ENCODE measurements at regions of chr10 and their contacts with region 1.

Region 1: GRCh38 chr10:66259836-66260235 is 666.0 kb upstream of the LRRTM3 start:
- DNase-seq: no peak
- ATAC-seq: no peak
- H3K4me3 ChIP-seq: no peak overlapping the region
- H3K4me3 Mint-ChIP-seq: no peak overlapping the region
- H3K27ac ChIP-seq: no peak overlapping the region
- H3K27ac Mint-ChIP-seq: no peak overlapping the region
- H3K4me1 ChIP-seq: no peaks in the 10 kb centered on the region
- H3K4me1 Mint-ChIP-seq: no peaks in the 10 kb centered on the region
- H3K27me3 ChIP-seq: no peaks in the 10 kb centered on the region
- H3K27me3 Mint-ChIP-seq: no peaks in the 10 kb centered on the region
- CTCF ChIP-seq: no peak

Region 2: DNA sequence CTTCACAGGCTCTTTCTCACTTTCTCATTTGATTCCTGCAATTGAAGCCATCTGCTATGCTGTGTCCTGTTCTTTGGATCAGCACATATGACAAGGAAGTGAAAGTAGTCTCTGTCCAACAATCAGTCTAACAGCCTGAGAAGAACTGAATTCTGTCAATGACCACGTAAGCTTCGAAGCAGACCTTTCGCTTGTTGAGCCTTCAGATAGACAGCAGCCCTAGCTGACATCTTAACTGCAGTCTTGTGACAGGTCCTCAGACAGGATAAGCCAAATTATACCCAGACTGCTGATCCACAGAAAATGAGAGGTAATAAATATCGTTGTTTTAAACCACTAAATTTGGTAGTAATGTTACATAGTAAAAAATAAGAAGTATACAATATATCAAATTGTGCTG is 25.0 kb before region 1 on chr10:
- CTCF ChIA-PET with region 1: no interaction called
- POLR2A ChIA-PET with region 1: no interaction called
- intact Hi-C with region 1: loop called in 1 of 2 experiments (anchors 1 kb)
- DNase-seq: no peak
- ATAC-seq: no peak
- H3K4me3 ChIP-seq: no peak overlapping the region
- H3K4me3 Mint-ChIP-seq: no peak overlapping the region
- H3K27ac ChIP-seq: no peak overlapping the region
- H3K27ac Mint-ChIP-seq: no peak overlapping the region
- H3K4me1 ChIP-seq: no peaks in the 10 kb centered on the region
- H3K4me1 Mint-ChIP-seq: no peaks in the 10 kb centered on the region
- H3K27me3 ChIP-seq: no peaks in the 10 kb centered on the region
- H3K27me3 Mint-ChIP-seq: no peaks in the 10 kb centered on the region
- CTCF ChIP-seq: no peak

Region 3: GRCh38 chr10:66242885-66243284 is 17.0 kb before region 1 on chr10:
- CTCF ChIA-PET with region 1: no interaction called
- POLR2A ChIA-PET with region 1: no interaction called
- intact Hi-C with region 1: loop called in 1 of 2 experiments (anchors 2 kb)
- DNase-seq: no peak
- ATAC-seq: no peak
- H3K4me3 ChIP-seq: no peak overlapping the region
- H3K4me3 Mint-ChIP-seq: no peak overlapping the region
- H3K27ac ChIP-seq: no peak overlapping the region
- H3K27ac Mint-ChIP-seq: no peak overlapping the region
- H3K4me1 ChIP-seq: no peaks in the 10 kb centered on the region
- H3K4me1 Mint-ChIP-seq: no peaks in the 10 kb centered on the region
- H3K27me3 ChIP-seq: no peaks in the 10 kb centered on the region
- H3K27me3 Mint-ChIP-seq: no peaks in the 10 kb centered on the region
- CTCF ChIP-seq: no peak

Region 4: DNA sequence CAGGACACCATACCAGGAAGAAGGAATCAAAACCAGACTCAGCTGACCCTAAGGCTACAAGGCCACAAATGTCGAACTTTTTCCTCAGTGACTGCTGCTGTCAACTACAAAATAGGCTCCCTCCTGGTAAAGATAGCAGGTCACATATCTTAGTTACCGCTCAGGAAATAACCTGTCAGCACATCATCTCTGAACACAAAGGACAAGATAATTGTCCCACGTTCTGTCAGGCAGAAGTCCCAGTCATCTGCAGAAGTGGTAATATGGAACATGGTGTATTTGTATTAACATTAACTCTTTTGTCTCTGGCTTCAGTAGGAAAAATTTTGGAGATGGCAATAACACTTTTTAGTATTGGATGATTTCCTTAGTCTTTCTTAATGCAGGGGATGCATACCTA is 35.8 kb after region 1 on chr10:
- CTCF ChIA-PET with region 1: no interaction called
- POLR2A ChIA-PET with region 1: no interaction called
- intact Hi-C with region 1: no loop called
- DNase-seq: no peak
- ATAC-seq: no peak
- H3K4me3 ChIP-seq: no peak overlapping the region
- H3K4me3 Mint-ChIP-seq: no peak overlapping the region
- H3K27ac ChIP-seq: no peak overlapping the region
- H3K27ac Mint-ChIP-seq: no peak overlapping the region
- H3K4me1 ChIP-seq: no peaks in the 10 kb centered on the region
- H3K4me1 Mint-ChIP-seq: no peaks in the 10 kb centered on the region
- H3K27me3 ChIP-seq: no peaks in the 10 kb centered on the region
- H3K27me3 Mint-ChIP-seq: no peaks in the 10 kb centered on the region
- CTCF ChIP-seq: no peak